ENCODE measurements at regions of chr2 and their contacts with region 1.

Region 1: DNA sequence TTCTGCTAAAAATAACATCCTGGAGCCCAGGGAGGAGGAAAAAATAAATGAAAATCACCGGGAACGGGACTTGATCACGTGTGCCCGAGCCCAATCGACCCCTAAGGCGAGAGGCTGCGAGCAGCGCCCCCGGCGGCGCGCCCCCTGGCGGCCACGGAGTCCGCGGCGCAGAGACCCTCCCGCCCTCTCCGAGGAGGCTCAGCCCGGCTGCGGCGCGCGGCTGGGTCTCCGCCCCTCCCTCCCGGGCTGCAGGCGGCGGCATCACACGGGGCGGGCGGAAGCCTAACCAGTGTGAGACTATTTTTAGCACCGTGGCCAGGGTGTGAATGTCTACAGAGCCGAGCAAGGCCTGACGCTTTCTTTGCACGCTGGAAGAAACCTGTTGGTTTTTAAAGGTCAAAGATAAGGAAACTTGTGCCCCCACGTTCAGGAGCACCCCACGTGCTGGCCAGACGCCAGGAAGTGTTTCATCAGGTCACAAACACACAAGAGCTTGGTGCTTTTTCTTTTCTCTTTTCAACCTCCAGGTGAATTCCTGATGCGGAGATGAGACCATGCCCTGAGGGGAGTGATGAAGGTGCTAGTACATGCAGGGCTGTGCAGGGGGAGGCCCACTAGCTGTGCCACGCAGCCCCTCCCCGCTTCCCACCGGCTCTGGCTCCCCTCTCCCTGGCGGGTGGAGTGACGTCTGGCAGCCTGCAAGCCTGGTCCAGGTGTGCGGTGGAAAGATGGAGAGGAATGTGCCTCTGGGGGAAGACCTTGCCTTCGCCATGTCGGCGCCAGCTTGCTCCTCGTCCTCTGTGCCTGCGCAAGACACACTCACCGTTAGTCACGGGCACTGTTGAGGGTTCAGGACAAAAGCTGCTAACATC is 35.3 kb upstream of the DNMT3A start:
- DNase-seq: peak; percentile 72
- ATAC-seq: peak; percentile 93
- H3K4me3 ChIP-seq: peak overlapping the region in 2 of 3 experiments; percentile 38 to 62; a peak in 4 of 6 replicates
- H3K27ac ChIP-seq: no peak overlapping the region
- H3K4me1 ChIP-seq: peaks cover 29% of the 10 kb centered on the region
- H3K27me3 ChIP-seq: peaks cover 5 to 25% of the 10 kb centered on the region in 2 experiments; a peak in 4 of 5 replicates
- CTCF ChIP-seq: peak; percentile 89
- EP300 ChIP-seq: no peak
- POLR2A ChIP-seq: no peak
- RAD21 ChIP-seq: peak; percentile 91

Region 2: GRCh38 chr2:25309402-25309801 is 67.6 kb before region 1 on chr2:
- CTCF ChIA-PET with region 1: interaction called, 8 read pairs
- POLR2A ChIA-PET with region 1: no interaction called
- in situ Hi-C with region 1: no loop called
- intact Hi-C with region 1: loop called (anchors 2 kb)
- DNase-seq: peak; percentile 59
- ATAC-seq: peak; percentile 68
- H3K4me3 ChIP-seq: no peak overlapping the region
- H3K27ac ChIP-seq: no peak overlapping the region
- H3K4me1 ChIP-seq: peaks cover 20% of the 10 kb centered on the region
- H3K27me3 ChIP-seq: no peaks in the 10 kb centered on the region
- CTCF ChIP-seq: peak; percentile 74
- EP300 ChIP-seq: no peak
- POLR2A ChIP-seq: no peak
- RAD21 ChIP-seq: peak; percentile 60; the same call in 1 of the 2 replicates

Region 3: DNA sequence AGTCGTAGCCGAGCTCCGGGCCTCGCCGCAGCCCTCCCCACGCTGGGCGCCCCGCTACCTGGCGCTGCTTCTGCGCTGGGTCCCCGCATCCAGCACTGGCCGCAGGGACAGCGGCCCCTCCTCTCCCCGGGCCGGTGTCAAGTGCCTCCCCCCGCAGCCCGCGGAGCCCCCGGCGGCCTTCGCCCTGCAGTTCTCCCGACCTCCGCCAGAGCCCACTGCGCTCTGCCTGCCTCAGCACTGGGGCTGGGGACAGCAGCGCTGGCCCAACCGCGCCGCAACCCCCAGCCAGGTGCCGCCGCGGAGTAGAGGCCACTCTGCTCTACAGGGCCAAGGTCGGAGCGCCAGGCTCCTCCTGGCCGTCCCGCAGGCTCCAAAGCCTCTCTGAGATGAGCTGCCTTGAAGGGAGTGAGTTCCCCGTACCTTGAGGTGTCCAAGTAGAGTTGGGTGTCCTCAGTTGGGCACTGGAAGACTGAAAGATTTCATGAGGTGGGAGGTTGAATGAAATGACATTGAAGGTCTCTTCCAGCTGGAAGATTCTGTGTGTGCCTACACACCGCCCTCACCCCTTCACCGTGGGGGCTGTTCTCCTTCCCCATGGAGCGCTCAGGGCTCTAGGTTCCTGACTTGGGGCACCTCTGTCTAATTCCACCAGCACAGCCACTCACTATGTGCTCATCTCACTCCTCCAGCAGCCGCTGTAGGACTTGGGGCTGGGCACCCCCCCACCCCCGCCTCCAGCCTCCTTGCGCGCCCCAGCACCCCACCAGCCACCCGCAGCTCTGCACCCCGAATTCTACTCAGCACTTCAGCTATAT is 34.4 kb before region 1 on chr2:
- CTCF ChIA-PET with region 1: interaction called, 15 read pairs
- POLR2A ChIA-PET with region 1: interaction called, 3 read pairs
- in situ Hi-C with region 1: no loop called
- intact Hi-C with region 1: loop called (anchors 1 kb)
- DNase-seq: peak; percentile 78
- ATAC-seq: peak; percentile 91
- H3K4me3 ChIP-seq: peak overlapping the region; percentile 64 to 81 (median 71); a peak in 5 of 6 replicates
- H3K27ac ChIP-seq: no peak overlapping the region
- H3K4me1 ChIP-seq: peaks cover 26% of the 10 kb centered on the region
- H3K27me3 ChIP-seq: peaks cover 0 to 27% of the 10 kb centered on the region in 2 experiments; a peak in 2 of 5 replicates
- CTCF ChIP-seq: peak; percentile 96
- EP300 ChIP-seq: peak in 1 of 2 experiments; percentile 12; a peak in 1 of 4 replicates
- POLR2A ChIP-seq: no peak
- RAD21 ChIP-seq: peak; percentile 98

Region 4: DNA sequence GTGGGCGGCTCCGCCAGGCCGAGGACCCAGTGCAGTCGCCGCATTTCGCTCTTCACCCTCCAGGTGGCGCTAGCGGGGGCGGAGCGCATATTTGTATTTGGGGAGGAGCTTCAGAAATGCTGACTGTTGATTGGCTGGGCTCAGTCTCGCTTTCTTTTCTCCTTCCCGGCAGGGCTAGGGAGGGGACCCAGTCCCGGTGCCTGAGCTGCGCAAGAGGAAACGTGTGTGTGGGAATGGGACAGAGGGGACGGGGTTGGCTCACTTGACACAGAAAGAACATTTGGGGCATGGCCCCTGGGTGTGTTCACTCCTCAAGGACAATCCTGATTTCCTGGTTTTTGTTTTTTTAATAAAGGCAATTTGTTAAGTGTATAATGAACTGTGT is 14.9 kb before region 1 on chr2:
- CTCF ChIA-PET with region 1: interaction called, 14 read pairs
- POLR2A ChIA-PET with region 1: interaction called, 11 read pairs
- in situ Hi-C with region 1: no loop called
- intact Hi-C with region 1: loop called (anchors 2 kb)
- DNase-seq: peak; percentile 93
- ATAC-seq: peak; percentile 97
- H3K4me3 ChIP-seq: peak overlapping the region; percentile 42 to 71 (median 61)
- H3K27ac ChIP-seq: no peak overlapping the region
- H3K4me1 ChIP-seq: peaks cover 14% of the 10 kb centered on the region
- H3K27me3 ChIP-seq: peaks cover 5 to 59% of the 10 kb centered on the region in 2 experiments; a peak in 4 of 5 replicates
- CTCF ChIP-seq: peak; percentile 97
- EP300 ChIP-seq: no peak
- POLR2A ChIP-seq: peak; percentile 35 to 86; a peak in 2 of 4 replicates
- RAD21 ChIP-seq: peak; percentile 67; the same call in 1 of the 2 replicates

Region 5: DNA sequence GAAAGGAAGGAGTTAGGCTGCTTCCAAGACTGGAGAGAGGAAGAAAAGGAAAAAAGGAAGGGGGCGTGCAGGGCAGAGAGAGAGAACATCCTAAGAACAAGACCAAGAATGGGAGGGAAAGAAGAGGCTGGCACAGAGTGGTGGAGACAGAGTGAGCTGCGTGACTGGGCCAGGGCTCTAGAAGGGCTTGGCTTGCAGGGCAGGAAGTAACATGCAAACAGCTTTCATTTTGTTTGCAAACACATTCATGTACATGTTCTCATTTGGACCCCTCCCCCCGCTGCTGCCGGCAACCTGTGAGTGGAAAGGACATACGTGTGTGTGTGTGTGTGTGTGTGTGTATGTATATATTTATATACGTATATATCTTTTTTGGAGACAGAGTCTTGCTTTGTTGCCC is 11.5 kb after region 1 on chr2:
- CTCF ChIA-PET with region 1: no interaction called
- POLR2A ChIA-PET with region 1: no interaction called
- in situ Hi-C with region 1: no loop called
- intact Hi-C with region 1: no loop called
- DNase-seq: no peak
- ATAC-seq: no peak
- H3K4me3 ChIP-seq: no peak overlapping the region
- H3K27ac ChIP-seq: no peak overlapping the region
- H3K4me1 ChIP-seq: no peaks in the 10 kb centered on the region
- H3K27me3 ChIP-seq: no peaks in the 10 kb centered on the region
- CTCF ChIP-seq: no peak
- EP300 ChIP-seq: no peak
- POLR2A ChIP-seq: no peak
- RAD21 ChIP-seq: no peak

Region 6: GRCh38 chr2:25431604-25432003 is 54.6 kb after region 1 on chr2:
- CTCF ChIA-PET with region 1: no interaction called
- POLR2A ChIA-PET with region 1: no interaction called
- in situ Hi-C with region 1: no loop called
- intact Hi-C with region 1: no loop called
- DNase-seq: no peak
- ATAC-seq: no peak
- H3K4me3 ChIP-seq: no peak overlapping the region
- H3K27ac ChIP-seq: no peak overlapping the region
- H3K4me1 ChIP-seq: no peaks in the 10 kb centered on the region
- H3K27me3 ChIP-seq: no peaks in the 10 kb centered on the region
- CTCF ChIP-seq: no peak
- EP300 ChIP-seq: no peak
- POLR2A ChIP-seq: no peak
- RAD21 ChIP-seq: no peak

Region 7: GRCh38 chr2:25483601-25484266 is 106.7 kb after region 1 on chr2:
- CTCF ChIA-PET with region 1: no interaction called
- POLR2A ChIA-PET with region 1: no interaction called
- in situ Hi-C with region 1: no loop called
- intact Hi-C with region 1: no loop called
- DNase-seq: no peak
- ATAC-seq: no peak
- H3K4me3 ChIP-seq: no peak overlapping the region
- H3K27ac ChIP-seq: no peak overlapping the region
- H3K4me1 ChIP-seq: no peaks in the 10 kb centered on the region
- H3K27me3 ChIP-seq: no peaks in the 10 kb centered on the region
- CTCF ChIP-seq: no peak
- EP300 ChIP-seq: no peak
- POLR2A ChIP-seq: no peak
- RAD21 ChIP-seq: no peak

Region 8: DNA sequence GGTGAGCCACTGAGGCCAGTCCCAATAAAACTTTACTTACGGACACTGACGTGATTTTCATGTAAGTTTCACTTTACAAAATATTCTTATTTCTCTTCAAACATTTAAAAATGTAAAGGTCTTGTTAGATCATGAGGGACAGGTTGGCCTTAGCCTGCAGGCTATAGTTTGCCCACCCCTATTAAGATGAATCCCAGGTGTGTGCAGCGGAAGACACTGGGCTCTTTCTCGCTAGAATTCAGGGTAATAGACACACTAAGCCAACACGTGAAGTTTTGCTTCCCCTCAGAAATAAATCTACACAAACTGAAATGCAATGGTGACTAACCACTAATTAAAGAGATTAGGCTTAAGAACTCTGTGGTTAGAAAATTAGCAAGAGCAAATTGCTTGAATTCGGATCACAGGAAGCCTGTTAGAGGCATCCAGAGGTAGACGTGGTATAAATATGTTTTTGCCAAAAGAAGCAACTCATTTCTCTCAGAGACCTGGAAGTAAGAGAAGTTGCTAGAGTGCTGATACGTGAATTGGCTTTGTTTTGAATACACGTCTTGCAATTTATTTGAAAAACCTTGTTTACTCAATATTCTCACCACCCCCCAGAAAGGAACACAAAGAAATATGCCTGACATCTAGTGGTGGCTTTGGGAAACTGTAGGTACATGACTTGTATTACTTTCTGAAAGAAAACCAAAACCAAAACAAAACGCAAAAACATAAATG is 144.8 kb after region 1 on chr2:
- CTCF ChIA-PET with region 1: no interaction called
- POLR2A ChIA-PET with region 1: no interaction called
- in situ Hi-C with region 1: no loop called
- intact Hi-C with region 1: loop called (anchors 2 kb)
- DNase-seq: peak; percentile 72
- ATAC-seq: peak; percentile 86
- H3K4me3 ChIP-seq: no peak overlapping the region
- H3K27ac ChIP-seq: no peak overlapping the region
- H3K4me1 ChIP-seq: peaks cover 7% of the 10 kb centered on the region
- H3K27me3 ChIP-seq: no peaks in the 10 kb centered on the region
- CTCF ChIP-seq: peak; percentile 85
- EP300 ChIP-seq: no peak
- POLR2A ChIP-seq: no peak
- RAD21 ChIP-seq: peak; percentile 73

Region 9: DNA sequence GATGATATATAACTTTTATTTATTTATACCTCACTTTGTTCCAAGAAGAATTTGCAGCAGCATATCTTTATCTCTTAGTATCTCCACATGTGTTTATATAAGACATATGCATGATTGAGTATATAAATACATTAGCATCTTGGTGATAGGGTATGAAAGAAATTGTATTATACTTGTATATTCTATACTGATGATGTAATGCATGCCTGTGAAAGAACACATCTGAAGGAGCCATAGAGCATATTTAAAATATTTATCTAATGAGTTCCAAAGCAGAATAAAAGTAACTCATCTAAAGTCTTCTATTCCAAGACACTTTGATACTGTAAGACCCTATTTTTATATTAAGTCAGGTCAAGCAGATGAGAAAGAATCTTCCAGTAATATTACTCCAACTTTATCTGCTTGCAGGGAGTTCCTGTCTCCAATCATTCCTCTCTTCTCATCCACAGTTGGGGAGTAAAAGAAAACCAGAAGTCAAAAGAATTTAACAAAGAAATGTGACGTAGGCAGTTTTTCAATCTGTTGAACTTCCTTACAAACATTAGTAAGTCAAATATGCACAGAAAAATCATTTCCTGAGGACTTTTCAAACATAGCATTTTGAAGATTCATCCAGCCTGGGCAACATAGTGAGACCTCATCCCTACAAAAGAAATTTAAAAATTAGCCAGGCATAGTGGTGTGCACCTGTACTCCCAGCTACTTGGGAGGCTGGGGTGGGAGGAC is 219.7 kb after region 1 on chr2:
- CTCF ChIA-PET with region 1: no interaction called
- POLR2A ChIA-PET with region 1: no interaction called
- in situ Hi-C with region 1: no loop called
- intact Hi-C with region 1: no loop called
- DNase-seq: no peak
- ATAC-seq: no peak
- H3K4me3 ChIP-seq: no peak overlapping the region
- H3K27ac ChIP-seq: no peak overlapping the region
- H3K4me1 ChIP-seq: no peaks in the 10 kb centered on the region
- H3K27me3 ChIP-seq: no peaks in the 10 kb centered on the region
- CTCF ChIP-seq: no peak
- EP300 ChIP-seq: no peak
- POLR2A ChIP-seq: no peak
- RAD21 ChIP-seq: no peak

Measured in HepG2 (cell line).